Common myeloid progenitor, CD34-positive (primary cell): ENCODE measurements at regions of chr4 and their contacts with region 1.

Region 1: DNA sequence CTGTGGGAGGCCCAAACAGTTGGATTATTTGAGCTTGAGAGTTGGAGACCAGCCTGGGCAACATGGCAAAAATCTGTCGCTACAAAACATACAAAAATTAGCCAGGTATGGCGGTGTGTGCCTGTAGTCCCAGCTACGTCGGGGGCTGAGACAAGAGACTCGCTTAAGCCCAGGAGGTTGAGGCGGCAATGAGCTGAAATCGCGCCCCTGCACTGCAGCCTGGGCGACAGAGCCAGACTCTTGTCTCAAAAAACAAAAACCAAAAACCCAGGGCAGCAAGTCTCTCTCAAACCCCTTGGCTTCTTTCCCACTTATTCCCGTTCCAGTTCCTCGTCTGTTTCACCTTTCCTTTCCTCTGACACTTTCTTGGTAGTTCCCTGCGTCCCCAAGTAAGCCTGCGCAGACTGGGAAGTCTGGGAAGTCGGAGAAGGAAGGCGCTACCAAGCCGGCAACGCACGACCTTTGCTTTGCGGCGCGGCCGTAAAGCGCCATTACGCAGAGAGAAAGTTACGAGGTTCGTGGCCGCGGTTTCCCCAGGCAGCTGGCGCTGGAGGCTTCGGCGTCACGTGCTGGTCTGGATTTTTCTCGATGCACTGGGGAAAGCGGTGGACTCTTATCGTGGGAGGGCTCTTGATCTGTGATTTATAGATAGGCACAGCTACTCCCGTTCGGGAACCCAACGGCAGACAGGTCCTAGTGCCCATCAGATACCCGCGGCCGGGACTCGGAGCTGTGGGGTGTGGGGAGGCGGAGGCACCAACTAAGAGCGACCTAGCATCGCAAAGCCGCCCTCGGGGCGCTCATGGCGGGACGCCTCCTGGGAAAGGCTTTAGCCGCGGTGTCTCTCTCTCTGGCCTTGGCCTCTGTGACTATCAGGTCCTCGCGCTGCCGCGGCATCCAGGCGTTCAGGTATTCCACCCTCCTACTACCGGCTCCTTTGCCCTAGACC is at the start of gene NUDT9:
- DNase-seq: peak; percentile 91 to 95 (median 92)
- H3K4me3 ChIP-seq: peak within 1 kb of the TSS; percentile 66 to 100 (median 93)
- H3K27ac ChIP-seq: peak within 1 kb of the TSS; percentile 80 to 87
- H3K4me1 ChIP-seq: peaks cover 10 to 22% (median 13%) of the 10 kb centered on the region in 4 experiments
- H3K27me3 ChIP-seq: no peaks in the 10 kb centered on the region

Region 2: DNA sequence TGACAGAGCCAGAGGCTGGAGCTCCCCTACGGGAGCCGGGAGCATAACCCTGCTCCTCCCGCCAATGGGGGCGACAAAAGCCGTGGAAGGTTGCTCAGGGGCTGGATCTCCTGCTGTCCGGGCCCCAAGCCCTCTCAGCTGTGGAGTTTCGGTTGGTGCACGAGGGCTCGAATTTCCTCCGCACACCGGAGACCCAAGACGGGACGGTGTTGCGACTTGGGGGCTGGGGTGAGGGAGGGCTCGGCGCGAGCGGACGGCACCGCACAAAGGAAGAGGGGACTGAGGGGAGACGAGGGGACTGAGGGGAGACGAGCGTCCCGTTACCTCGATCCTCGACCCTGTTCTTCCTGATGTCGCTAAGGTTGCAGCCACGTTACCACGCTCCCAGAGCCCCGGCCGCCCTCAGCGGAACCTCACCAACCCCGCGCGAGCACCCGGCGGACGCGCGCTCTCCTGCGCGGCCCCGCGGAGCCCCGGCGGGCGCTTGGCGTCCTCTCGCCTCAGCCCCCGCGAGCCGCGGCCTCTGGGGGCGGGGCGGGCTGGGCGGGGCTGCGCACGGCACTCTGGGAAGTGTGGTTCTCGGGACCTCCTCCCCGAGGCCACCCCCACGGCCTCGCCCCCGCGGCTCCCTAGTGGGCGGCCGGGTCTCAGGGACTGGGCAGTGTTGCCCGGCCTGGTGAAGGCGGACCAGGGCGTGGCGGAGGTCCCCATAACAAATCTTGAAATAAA is 202.1 kb before region 1 on chr4 and contains the start of gene KLHL8:
- CTCF ChIA-PET with region 1: no interaction called
- POLR2A ChIA-PET with region 1: no interaction called
- DNase-seq: peak; percentile 87 to 94 (median 92)
- H3K4me3 ChIP-seq: peak within 1 kb of the TSS; percentile 78 to 99 (median 89)
- H3K27ac ChIP-seq: peak within 1 kb of the TSS; percentile 33 to 89
- H3K4me1 ChIP-seq: peaks cover 6 to 18% (median 15%) of the 10 kb centered on the region in 4 experiments
- H3K27me3 ChIP-seq: no peaks in the 10 kb centered on the region

Region 3: GRCh38 chr4:87390891-87391575 is 31.3 kb before region 1 on chr4 and contains the start of gene HSD17B11:
- CTCF ChIA-PET with region 1: interaction called, 13 read pairs
- POLR2A ChIA-PET with region 1: interaction called, 6 read pairs
- DNase-seq: peak; percentile 96 to 98 (median 97)
- H3K4me3 ChIP-seq: peak within 1 kb of the TSS; percentile 52 to 100 (median 95)
- H3K27ac ChIP-seq: peak within 1 kb of the TSS; percentile 86 to 95
- H3K4me1 ChIP-seq: peaks cover 0 to 21% (median 12%) of the 10 kb centered on the region in 4 experiments
- H3K27me3 ChIP-seq: no peaks in the 10 kb centered on the region